HEK293 (cell line): ENCODE measurements at regions of chr18 and their contacts with region 1.

Region 1: GRCh38 chr18:31424383-31424988 is 23.1 kb upstream of the DSG3 start:
- H3K4me3 ChIP-seq: no peak overlapping the region
- H3K27ac ChIP-seq: no peak overlapping the region
- H3K4me1 ChIP-seq: no peaks in the 10 kb centered on the region
- CTCF ChIP-seq: peak; percentile 57

Region 2: DNA sequence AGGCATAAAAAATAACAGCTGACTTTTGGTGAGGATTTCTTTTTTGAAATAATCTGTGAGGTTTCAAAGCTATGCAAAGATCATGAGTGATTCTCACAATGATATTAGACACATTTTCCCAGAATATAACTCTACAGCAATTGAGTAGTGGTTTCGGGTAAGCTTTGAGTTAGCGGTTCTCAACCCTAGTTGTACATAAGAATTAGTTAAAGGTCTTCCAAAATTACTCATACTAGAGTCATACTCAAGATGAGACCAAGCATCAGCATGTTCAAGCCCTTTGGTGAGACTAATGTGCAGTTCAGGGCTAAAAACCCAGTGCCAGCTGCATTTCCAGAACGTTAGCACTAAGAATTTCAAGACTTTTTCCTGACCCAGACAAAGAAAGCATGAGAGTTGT is 16.8 kb before region 1 on chr18:
- CTCF ChIA-PET with region 1: interaction called, 14 read pairs
- POLR2A ChIA-PET with region 1: no interaction called
- H3K4me3 ChIP-seq: no peak overlapping the region
- H3K27ac ChIP-seq: no peak overlapping the region
- H3K4me1 ChIP-seq: no peaks in the 10 kb centered on the region
- CTCF ChIP-seq: no peak

Region 3: DNA sequence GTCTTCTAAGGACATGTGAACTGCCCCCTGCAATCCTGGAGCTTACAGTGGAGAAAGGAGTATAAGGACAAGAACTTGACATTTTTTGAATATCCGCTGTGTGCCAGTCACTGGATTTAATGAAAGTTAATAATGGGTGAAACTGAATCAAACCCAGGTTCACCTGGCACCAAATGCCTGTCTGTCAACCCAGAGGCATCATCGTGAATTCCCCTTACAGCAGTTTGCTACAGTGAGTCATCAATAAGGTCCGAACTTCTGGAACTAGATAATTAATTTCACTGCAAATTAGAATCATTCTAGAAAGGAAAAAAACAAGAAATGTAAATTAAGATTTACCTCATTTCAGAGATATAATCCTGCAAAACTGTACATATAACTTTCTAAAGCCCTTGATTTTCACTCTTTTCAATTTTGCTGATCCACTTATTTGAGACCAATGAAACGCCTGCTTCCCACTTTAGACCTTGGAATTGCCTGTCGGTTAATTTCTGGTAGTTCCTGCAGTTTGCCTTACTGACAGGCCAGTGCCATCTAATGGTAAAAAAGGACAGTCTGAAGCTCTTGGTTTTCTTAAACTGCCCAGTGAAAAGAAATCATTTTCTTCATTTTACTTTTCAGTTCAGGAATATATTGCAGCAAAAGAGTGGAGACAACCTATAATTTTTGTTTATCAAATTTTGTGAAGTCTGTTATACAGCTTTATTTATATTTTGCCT is 81.7 kb after region 1 on chr18:
- CTCF ChIA-PET with region 1: interaction called, 17 read pairs
- POLR2A ChIA-PET with region 1: no interaction called
- H3K4me3 ChIP-seq: no peak overlapping the region
- H3K27ac ChIP-seq: no peak overlapping the region
- H3K4me1 ChIP-seq: peaks cover 3% of the 10 kb centered on the region; the same call in 1 of the 2 replicates
- CTCF ChIP-seq: no peak

Region 4: GRCh38 chr18:31546476-31546875 is 122.0 kb after region 1 on chr18:
- CTCF ChIA-PET with region 1: interaction called, 35 read pairs
- POLR2A ChIA-PET with region 1: no interaction called
- H3K4me3 ChIP-seq: no peak overlapping the region
- H3K27ac ChIP-seq: no peak overlapping the region
- H3K4me1 ChIP-seq: no peaks in the 10 kb centered on the region
- CTCF ChIP-seq: no peak

Region 5: GRCh38 chr18:31563778-31564177 is 139.3 kb after region 1 on chr18:
- CTCF ChIA-PET with region 1: interaction called, 62 read pairs
- POLR2A ChIA-PET with region 1: no interaction called
- H3K4me3 ChIP-seq: no peak overlapping the region
- H3K27ac ChIP-seq: no peak overlapping the region
- H3K4me1 ChIP-seq: no peaks in the 10 kb centered on the region
- CTCF ChIP-seq: no peak